ENCODE measurements at regions of chr12 and their contacts with region 1.

Region 1: GRCh38 chr12:101773650-101774162 is 34.4 kb upstream of the SYCP3 start:
- DNase-seq: peak; percentile 27
- ATAC-seq: peak; percentile 92
- H3K4me3 Mint-ChIP-seq: no peak overlapping the region
- H3K27ac Mint-ChIP-seq: no peak overlapping the region
- H3K4me1 Mint-ChIP-seq: peaks cover 2% of the 10 kb centered on the region
- H3K27me3 Mint-ChIP-seq: no peaks in the 10 kb centered on the region
- CTCF ChIP-seq: peak; percentile 95

Region 2: GRCh38 chr12:101490286-101490920 is 283.3 kb before region 1 on chr12:
- CTCF ChIA-PET with region 1: no interaction called
- POLR2A ChIA-PET with region 1: no interaction called
- intact Hi-C with region 1: loop called (anchors 1 kb)
- DNase-seq: no peak
- ATAC-seq: peak; percentile 61
- H3K4me3 Mint-ChIP-seq: no peak overlapping the region
- H3K27ac Mint-ChIP-seq: no peak overlapping the region
- H3K4me1 Mint-ChIP-seq: no peaks in the 10 kb centered on the region
- H3K27me3 Mint-ChIP-seq: peaks cover 12% of the 10 kb centered on the region
- CTCF ChIP-seq: no peak

Region 3: DNA sequence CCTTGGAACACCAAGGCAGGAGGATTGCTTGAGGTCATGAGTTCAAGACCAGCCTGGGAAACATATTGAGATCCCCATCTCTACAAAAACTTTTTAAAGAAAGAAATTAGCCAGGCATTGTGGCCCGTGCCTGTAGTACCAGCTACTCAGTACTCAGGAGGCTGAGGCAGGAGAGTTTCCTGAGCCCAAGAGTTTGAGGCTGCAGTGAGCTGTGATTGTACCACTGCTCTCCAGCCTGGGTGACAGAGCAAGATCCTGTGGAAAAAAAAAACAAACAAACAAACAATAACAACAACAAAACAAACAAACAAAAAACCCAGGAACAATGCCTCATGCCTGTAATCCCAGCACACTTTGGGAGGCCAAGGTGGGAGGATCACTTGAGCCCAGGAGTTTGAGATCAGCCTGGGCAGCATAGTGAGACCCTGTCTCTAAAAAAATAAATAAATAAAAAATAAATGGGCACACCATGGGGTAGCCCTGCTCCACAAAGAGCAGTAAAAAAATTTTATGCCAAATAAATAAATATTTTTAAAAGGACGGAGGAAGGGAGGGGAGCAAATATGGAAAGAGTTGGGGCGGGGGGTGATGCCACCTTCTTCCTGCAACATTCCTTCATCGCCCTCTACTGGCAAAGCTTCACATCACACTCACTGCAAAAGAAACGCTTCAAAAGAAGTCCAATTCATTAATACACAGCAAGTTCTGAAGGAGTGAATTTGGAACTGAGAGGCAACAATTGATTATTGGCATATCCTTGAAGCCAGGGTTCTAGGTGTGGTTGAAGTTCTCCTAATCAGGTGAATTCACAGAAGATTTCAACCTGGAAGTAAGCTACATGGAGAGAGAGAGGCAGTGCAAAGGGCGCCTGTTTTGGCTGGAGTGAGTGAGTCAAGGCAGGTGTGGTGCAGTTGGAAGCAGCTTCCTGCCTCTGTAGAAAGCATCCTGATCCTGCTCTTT is 65.9 kb after region 1 on chr12:
- CTCF ChIA-PET with region 1: interaction called, 70 read pairs
- POLR2A ChIA-PET with region 1: interaction called, 8 read pairs
- intact Hi-C with region 1: loop called (anchors 1 kb)
- DNase-seq: no peak
- ATAC-seq: peak; percentile 82
- H3K4me3 Mint-ChIP-seq: no peak overlapping the region
- H3K27ac Mint-ChIP-seq: no peak overlapping the region
- H3K4me1 Mint-ChIP-seq: peaks cover 21% of the 10 kb centered on the region
- H3K27me3 Mint-ChIP-seq: no peaks in the 10 kb centered on the region
- CTCF ChIP-seq: peak; percentile 77

Region 4: DNA sequence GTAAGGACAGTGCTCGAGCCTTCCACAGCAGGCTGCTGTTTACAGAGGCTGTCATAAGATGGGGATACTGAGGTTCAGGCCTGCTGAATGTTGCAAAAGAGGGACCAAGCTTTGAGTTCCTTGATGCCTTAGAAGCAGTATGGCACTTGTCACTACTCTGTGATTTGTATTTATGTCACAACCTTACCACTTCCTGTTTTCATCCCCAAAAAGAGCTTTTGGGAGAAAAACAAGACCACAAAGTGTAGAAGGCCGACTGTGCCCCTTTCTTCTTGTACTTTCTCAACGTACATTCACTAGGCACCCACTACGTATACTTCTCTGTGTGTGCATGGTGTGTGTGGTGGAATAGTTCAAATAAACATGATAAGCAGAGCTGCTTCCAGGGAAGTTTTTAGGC is 193.8 kb after region 1 on chr12:
- CTCF ChIA-PET with region 1: no interaction called
- POLR2A ChIA-PET with region 1: no interaction called
- intact Hi-C with region 1: no loop called
- DNase-seq: no peak
- ATAC-seq: no peak
- H3K4me3 Mint-ChIP-seq: no peak overlapping the region
- H3K27ac Mint-ChIP-seq: no peak overlapping the region
- H3K4me1 Mint-ChIP-seq: peaks cover 12% of the 10 kb centered on the region
- H3K27me3 Mint-ChIP-seq: no peaks in the 10 kb centered on the region
- CTCF ChIP-seq: no peak

Region 5: GRCh38 chr12:102061560-102062418 is 288.1 kb after region 1 on chr12 and contains the start of gene WASHC3:
- CTCF ChIA-PET with region 1: no interaction called
- POLR2A ChIA-PET with region 1: no interaction called
- intact Hi-C with region 1: loop called (anchors 10 kb)
- DNase-seq: peak; percentile 89
- ATAC-seq: peak; percentile 95
- H3K4me3 Mint-ChIP-seq: peak within 1 kb of the TSS; percentile 98
- H3K27ac Mint-ChIP-seq: peak within 1 kb of the TSS; percentile 97
- H3K4me1 Mint-ChIP-seq: peaks cover 21% of the 10 kb centered on the region
- H3K27me3 Mint-ChIP-seq: no peaks in the 10 kb centered on the region
- CTCF ChIP-seq: no peak
- total RNA-seq, gene WASHC3: 47.3 and 50.6 TPM in 2 replicates

Region 6: DNA sequence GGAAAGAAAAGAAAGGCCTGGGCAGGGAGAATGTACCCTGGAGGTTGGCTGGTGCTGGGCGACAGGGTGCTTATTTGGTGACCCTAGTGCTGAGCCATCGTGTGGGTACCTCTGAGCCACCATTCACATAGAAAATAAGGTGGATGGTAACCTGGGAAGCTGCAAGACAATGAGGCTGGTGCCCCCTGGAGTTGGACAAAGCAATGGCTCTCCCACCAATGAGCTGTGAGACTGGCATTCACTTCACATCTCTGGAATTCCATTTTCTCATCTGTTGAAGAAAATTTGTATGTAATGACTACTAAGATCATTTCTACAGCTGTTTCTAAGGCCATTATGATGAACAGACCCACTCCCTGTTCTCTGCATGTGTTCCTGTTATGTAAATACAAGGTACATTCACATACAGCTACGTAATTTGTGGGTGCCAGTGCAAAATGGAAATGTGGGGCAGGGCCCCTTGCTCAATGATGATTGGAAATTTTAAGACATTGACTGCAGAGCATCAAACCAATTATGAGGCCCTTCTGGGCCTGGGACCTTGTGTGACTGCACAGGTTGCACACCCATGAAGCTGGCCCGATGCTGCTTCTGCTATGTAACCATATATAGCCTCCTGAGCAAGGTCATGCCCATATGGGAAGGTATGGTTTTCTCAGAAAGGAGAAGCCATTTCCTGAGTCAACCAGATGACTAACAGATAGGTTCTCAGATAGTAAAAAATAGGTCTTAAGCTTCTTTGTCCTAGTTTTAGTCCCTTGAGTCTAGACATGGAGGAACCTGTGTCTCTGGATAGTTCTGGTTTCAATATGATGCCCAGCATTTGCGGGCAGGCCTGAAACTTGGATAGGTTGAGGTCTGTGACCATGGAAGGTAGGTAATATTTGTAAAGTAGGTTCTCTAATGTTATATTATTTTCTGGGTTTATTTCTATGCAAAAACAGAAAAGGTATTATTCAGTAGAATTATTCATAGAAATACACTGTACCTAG is 770.1 kb after region 1 on chr12:
- CTCF ChIA-PET with region 1: no interaction called
- POLR2A ChIA-PET with region 1: no interaction called
- intact Hi-C with region 1: loop called (anchors 2 kb)
- DNase-seq: no peak
- ATAC-seq: no peak
- H3K4me3 Mint-ChIP-seq: no peak overlapping the region
- H3K27ac Mint-ChIP-seq: no peak overlapping the region
- H3K4me1 Mint-ChIP-seq: no peaks in the 10 kb centered on the region
- H3K27me3 Mint-ChIP-seq: peaks cover 7% of the 10 kb centered on the region
- CTCF ChIP-seq: no peak

Region 7: GRCh38 chr12:102769319-102769916 is 995.7 kb after region 1 on chr12:
- CTCF ChIA-PET with region 1: interaction called, 3 read pairs
- POLR2A ChIA-PET with region 1: no interaction called
- intact Hi-C with region 1: loop called (anchors 1 kb)
- DNase-seq: no peak
- ATAC-seq: peak; percentile 71
- H3K4me3 Mint-ChIP-seq: no peak overlapping the region
- H3K27ac Mint-ChIP-seq: no peak overlapping the region
- H3K4me1 Mint-ChIP-seq: peaks cover 2% of the 10 kb centered on the region
- H3K27me3 Mint-ChIP-seq: peaks cover 10% of the 10 kb centered on the region
- CTCF ChIP-seq: no peak